ENCODE measurements at regions of chr9 and their contacts with region 1.

Region 1: GRCh38 chr9:18208154-18209059 is 265.5 kb upstream of the ADAMTSL1 start:
- H3K4me3 ChIP-seq: no peak overlapping the region
- H3K27ac ChIP-seq: no peak overlapping the region
- H3K4me1 ChIP-seq: no peaks in the 10 kb centered on the region
- CTCF ChIP-seq: peak; percentile 36; the same call in 1 of the 2 replicates

Region 2: GRCh38 chr9:17531642-17532254 is 676.7 kb before region 1 on chr9:
- CTCF ChIA-PET with region 1: interaction called, 13 read pairs
- POLR2A ChIA-PET with region 1: no interaction called
- H3K4me3 ChIP-seq: no peak overlapping the region
- H3K27ac ChIP-seq: no peak overlapping the region
- H3K4me1 ChIP-seq: no peaks in the 10 kb centered on the region
- CTCF ChIP-seq: peak; percentile 42; the same call in 1 of the 2 replicates

Region 3: GRCh38 chr9:17802249-17802857 is 406.1 kb before region 1 on chr9:
- CTCF ChIA-PET with region 1: interaction called, 14 read pairs
- POLR2A ChIA-PET with region 1: no interaction called
- H3K4me3 ChIP-seq: no peak overlapping the region
- H3K27ac ChIP-seq: no peak overlapping the region
- H3K4me1 ChIP-seq: no peaks in the 10 kb centered on the region
- CTCF ChIP-seq: no peak

Region 4: GRCh38 chr9:18143028-18143745 is 65.2 kb before region 1 on chr9:
- CTCF ChIA-PET with region 1: interaction called, 11 read pairs
- POLR2A ChIA-PET with region 1: no interaction called
- H3K4me3 ChIP-seq: no peak overlapping the region
- H3K27ac ChIP-seq: no peak overlapping the region
- H3K4me1 ChIP-seq: no peaks in the 10 kb centered on the region
- CTCF ChIP-seq: no peak

Region 5: DNA sequence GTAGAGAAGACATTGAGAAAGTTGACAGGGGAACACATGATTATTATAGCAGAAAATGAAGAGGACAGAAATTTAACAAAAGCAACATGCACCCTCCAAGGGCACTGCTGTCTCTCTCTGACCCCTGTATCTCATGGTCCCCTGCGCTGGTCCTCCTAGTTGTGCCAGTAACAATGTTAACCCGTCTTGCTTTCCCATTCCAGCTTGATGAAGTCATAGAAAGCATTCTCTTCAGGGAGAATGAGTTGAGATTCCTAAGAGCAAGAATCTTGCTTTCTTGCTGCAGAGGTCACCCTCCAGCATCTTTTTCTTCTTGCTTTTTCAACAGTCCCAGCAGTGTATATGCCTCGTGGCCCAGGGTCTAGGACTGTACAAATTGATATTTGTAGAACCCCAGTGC is 14.1 kb before region 1 on chr9:
- CTCF ChIA-PET with region 1: interaction called, 10 read pairs
- POLR2A ChIA-PET with region 1: no interaction called
- H3K4me3 ChIP-seq: no peak overlapping the region
- H3K27ac ChIP-seq: no peak overlapping the region
- H3K4me1 ChIP-seq: no peaks in the 10 kb centered on the region
- CTCF ChIP-seq: no peak

Region 6: GRCh38 chr9:18238254-18238653 is 29.8 kb after region 1 on chr9:
- CTCF ChIA-PET with region 1: interaction called, 14 read pairs
- POLR2A ChIA-PET with region 1: no interaction called
- H3K4me3 ChIP-seq: no peak overlapping the region
- H3K27ac ChIP-seq: no peak overlapping the region
- H3K4me1 ChIP-seq: peaks cover 2% of the 10 kb centered on the region; the same call in 1 of the 2 replicates
- CTCF ChIP-seq: no peak

Region 7: DNA sequence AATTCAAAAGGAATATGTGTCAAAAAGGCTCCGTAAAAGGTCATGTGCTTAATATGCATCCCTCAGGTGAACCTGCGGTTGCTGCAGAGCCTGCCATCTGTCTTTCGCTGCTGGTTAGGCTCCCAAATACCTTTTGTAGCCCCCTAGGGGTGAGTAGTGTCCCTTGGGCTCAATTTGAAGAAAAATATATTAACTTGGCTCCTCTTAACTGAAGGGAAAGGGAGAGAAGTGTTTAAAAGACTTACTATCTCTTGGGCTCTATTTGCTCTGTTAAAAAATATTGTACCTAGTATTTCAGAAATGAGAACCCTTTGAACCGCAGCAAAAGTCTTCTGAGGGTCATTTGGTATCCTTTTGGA is 89.1 kb after region 1 on chr9:
- CTCF ChIA-PET with region 1: no interaction called
- POLR2A ChIA-PET with region 1: no interaction called
- H3K4me3 ChIP-seq: no peak overlapping the region
- H3K27ac ChIP-seq: no peak overlapping the region
- H3K4me1 ChIP-seq: peaks cover 4% of the 10 kb centered on the region; the same call in 1 of the 2 replicates
- CTCF ChIP-seq: no peak